GM23248 (cell line): ENCODE measurements at regions of chr10 and their contacts with region 1.

Region 1: DNA sequence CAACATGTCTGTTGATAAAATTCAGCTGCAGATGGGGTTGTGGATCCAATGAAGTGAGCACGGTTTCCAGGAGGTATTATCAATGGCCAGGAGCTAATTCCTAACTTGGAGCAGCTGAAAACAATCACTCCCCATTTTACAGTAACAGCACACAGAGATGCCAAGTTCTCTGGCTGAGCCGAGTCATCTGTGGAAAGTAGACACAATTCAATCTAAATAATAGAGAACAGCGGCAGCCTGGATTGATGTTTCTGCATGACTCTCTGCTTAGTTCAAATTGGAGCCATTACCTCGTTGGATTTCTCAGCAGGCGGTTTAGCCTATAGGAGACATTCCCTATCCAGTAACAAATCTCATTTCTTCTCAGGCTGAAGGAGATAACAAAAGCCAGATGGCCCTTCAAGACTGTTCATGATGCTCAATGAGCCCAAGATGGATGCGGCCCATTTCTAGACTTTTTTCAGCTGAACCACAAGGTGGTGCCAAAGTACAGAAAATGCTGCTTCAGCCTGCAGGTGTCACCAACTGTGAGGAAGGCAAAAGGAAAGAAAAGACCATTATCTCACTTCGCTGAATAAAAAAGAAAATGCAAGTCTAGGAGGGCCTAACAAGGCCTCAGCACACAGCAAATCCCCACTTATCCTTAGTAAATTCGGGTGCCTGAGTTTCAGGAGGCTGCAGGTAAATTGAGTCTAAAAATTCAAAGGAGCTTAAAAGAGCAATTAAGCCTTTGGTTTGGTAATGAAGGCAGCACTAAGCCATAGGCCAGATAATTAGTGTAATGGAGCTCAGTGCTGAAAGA is 83.7 kb downstream of the SLC16A9 start:
- DNase-seq: peak; percentile 80
- H3K4me3 ChIP-seq: no peak overlapping the region
- H3K27ac ChIP-seq: no peak overlapping the region
- H3K4me1 ChIP-seq: no peaks in the 10 kb centered on the region
- H3K27me3 ChIP-seq: no peaks in the 10 kb centered on the region; the same call in 1 of the 2 replicates

Region 2: GRCh38 chr10:59524348-59524747 is 101.6 kb before region 1 on chr10:
- in situ Hi-C with region 1: no loop called
- DNase-seq: no peak
- H3K4me3 ChIP-seq: no peak overlapping the region
- H3K27ac ChIP-seq: no peak overlapping the region
- H3K4me1 ChIP-seq: no peaks in the 10 kb centered on the region
- H3K27me3 ChIP-seq: no peaks in the 10 kb centered on the region

Region 3: GRCh38 chr10:60032723-60033122 is 406.8 kb after region 1 on chr10:
- in situ Hi-C with region 1: loop called (anchors 25 kb)
- DNase-seq: peak; percentile 47
- H3K4me3 ChIP-seq: no peak overlapping the region
- H3K27ac ChIP-seq: no peak overlapping the region
- H3K4me1 ChIP-seq: no peaks in the 10 kb centered on the region
- H3K27me3 ChIP-seq: peaks cover 6% of the 10 kb centered on the region; the same call in 1 of the 2 replicates

Region 4: DNA sequence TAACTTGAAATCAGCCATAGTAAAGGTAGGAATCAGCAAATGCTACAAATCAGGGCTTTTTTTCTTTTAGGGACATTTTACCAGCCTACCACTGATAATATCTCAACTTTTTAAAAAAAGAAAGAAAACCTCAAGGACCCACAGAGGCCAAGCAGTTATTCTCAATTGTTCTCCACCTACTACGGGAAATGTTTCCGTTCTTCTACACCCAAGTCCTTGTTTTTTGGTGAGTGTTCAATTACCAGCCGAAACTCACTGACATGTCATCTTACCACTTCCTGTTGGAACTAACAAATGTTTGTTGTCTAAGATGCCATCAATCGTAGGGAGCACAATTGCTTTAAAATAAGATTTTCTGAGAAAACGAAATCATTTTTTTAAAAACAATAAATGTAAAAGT is 1102.1 kb after region 1 on chr10:
- in situ Hi-C with region 1: no loop called
- DNase-seq: no peak
- H3K4me3 ChIP-seq: no peak overlapping the region
- H3K27ac ChIP-seq: no peak overlapping the region
- H3K4me1 ChIP-seq: no peaks in the 10 kb centered on the region
- H3K27me3 ChIP-seq: peaks cover 40% of the 10 kb centered on the region